ENCODE measurements at regions of chr17 and their contacts with region 1.

Region 1: GRCh38 chr17:15944759-15945529 is at the start of gene ADORA2B:
- DNase-seq: peak; percentile 66 to 78 (median 69)
- H3K4me3 ChIP-seq: peak within 1 kb of the TSS; percentile 68 to 79 (median 72)
- H3K4me3 Mint-ChIP-seq: peak within 1 kb of the TSS; percentile 80 to 89
- H3K27ac ChIP-seq: peak within 1 kb of the TSS in 1 of 2 donors; percentile 83
- H3K27ac Mint-ChIP-seq: peak within 1 kb of the TSS; percentile 83 to 98 (median 94)
- H3K4me1 ChIP-seq: peaks cover 58 to 65% of the 10 kb centered on the region in 2 donors
- H3K4me1 Mint-ChIP-seq: peaks cover 49% of the 10 kb centered on the region
- H3K27me3 ChIP-seq: peaks cover 0 to 5% of the 10 kb centered on the region in 2 donors
- H3K27me3 Mint-ChIP-seq: peaks cover 2 to 18% (median 6%) of the 10 kb centered on the region in 3 donors
- CTCF ChIP-seq: peak; percentile 79
- polyA plus RNA-seq, gene ADORA2B: 2.0 to 6.4 (median 4.4) TPM

Region 2: DNA sequence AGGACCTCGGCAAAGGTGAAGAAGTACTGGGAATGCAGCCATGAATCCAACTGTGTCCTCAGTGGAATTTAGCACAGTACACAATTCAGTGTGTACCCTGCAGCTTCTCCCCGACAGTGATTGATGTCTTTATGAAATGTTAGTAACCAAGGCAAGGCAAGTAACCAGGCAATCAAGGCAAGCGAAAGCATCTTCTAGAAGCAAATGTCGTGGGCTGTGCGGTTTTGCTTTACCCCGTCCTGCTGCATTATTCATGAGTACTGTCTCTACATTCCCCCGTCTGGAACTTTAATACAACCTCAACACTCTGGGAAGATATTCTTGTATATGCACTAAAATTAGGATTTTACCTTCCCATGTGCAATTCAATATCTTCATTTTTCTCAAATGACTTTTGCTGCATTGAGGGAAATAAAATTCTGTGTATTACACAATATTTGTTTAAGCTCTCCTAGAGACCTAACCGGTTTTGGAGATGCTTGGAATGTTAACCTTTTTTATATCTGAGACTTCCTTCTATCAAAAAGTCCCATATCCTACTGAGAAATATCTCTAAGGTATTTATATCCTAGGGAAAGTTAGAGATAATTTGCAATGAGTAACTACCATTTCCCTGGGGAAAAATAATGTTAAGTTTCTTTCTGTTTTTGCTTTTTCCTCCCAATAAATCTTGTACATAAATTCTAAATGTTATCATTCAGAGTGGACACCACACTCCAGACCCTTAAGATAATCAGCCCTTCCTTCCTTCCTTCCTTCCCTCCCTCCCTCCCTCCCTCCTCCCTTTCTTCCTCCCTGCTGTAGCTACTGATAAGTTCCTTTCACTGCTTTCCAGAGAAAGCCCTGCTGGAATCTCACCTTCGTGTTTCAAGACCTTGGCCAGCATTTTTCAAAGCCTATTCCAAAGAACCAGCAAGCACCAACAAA is 52.0 kb before region 1 on chr17:
- intact Hi-C with region 1: loop called in 1 of 2 experiments (anchors 5 kb)
- DNase-seq: no peak
- H3K4me3 ChIP-seq: no peak overlapping the region
- H3K4me3 Mint-ChIP-seq: no peak overlapping the region
- H3K27ac ChIP-seq: no peak overlapping the region
- H3K27ac Mint-ChIP-seq: no peak overlapping the region
- H3K4me1 ChIP-seq: peaks cover 3 to 19% of the 10 kb centered on the region in 2 donors
- H3K4me1 Mint-ChIP-seq: peaks cover 19% of the 10 kb centered on the region
- H3K27me3 ChIP-seq: no peaks in the 10 kb centered on the region
- H3K27me3 Mint-ChIP-seq: peaks cover 0 to 3% (median 2%) of the 10 kb centered on the region in 3 donors
- CTCF ChIP-seq: no peak

Measured in CD14-positive monocyte (primary cell).